CD4-positive, alpha-beta T cell (primary cell): ENCODE measurements at regions of chr3 and their contacts with region 1.

Region 1: GRCh38 chr3:27312044-27312668 is 57.0 kb downstream of the NEK10 start:
- DNase-seq: peak in 4 of 14 experiments; percentile 6 to 72 (median 70)
- ATAC-seq: peak; percentile 61
- H3K4me3 ChIP-seq: no peak overlapping the region
- H3K4me3 Mint-ChIP-seq: no peak overlapping the region
- H3K27ac ChIP-seq: no peak overlapping the region
- H3K27ac Mint-ChIP-seq: no peak overlapping the region
- H3K4me1 ChIP-seq: no peaks in the 10 kb centered on the region
- H3K4me1 Mint-ChIP-seq: no peaks in the 10 kb centered on the region
- H3K27me3 ChIP-seq: no peaks in the 10 kb centered on the region
- H3K27me3 Mint-ChIP-seq: peaks cover 5% of the 10 kb centered on the region
- CTCF ChIP-seq: peak; percentile 90

Region 2: DNA sequence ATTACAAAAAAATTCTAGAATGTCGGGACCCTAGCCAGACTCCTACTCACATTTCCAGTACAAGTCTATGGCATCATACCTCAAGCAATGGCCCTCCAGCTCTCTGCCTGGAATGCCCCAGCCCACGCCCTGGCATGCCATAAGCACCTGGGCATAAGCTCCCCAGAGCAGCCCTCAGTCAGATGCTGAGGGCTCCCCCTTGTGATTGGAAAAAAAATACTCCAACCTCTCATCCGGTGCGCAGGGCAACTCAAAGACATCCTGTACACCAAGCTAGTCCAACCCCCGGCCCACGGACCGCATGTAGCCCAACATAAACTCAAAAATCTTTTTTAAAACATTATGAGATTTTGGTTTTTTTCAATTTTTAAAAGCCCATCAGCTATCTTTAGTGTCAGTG is 58.3 kb before region 1 on chr3:
- CTCF ChIA-PET with region 1: no interaction called
- POLR2A ChIA-PET with region 1: no interaction called
- intact Hi-C with region 1: no loop called
- DNase-seq: peak in 3 of 14 experiments; percentile 8 to 15 (median 9)
- ATAC-seq: no peak
- H3K4me3 ChIP-seq: no peak overlapping the region
- H3K4me3 Mint-ChIP-seq: no peak overlapping the region
- H3K27ac ChIP-seq: no peak overlapping the region
- H3K27ac Mint-ChIP-seq: no peak overlapping the region
- H3K4me1 ChIP-seq: no peaks in the 10 kb centered on the region
- H3K4me1 Mint-ChIP-seq: no peaks in the 10 kb centered on the region
- H3K27me3 ChIP-seq: no peaks in the 10 kb centered on the region
- H3K27me3 Mint-ChIP-seq: peaks cover 7% of the 10 kb centered on the region
- CTCF ChIP-seq: no peak

Region 3: GRCh38 chr3:27368831-27369607 is 56.9 kb after region 1 on chr3 and contains the start of gene NEK10:
- CTCF ChIA-PET with region 1: no interaction called
- POLR2A ChIA-PET with region 1: interaction called, 4 read pairs
- intact Hi-C with region 1: loop called in 1 of 2 experiments (anchors 5 kb)
- DNase-seq: peak; percentile 84 to 96 (median 91)
- ATAC-seq: peak; percentile 96
- H3K4me3 ChIP-seq: peak within 1 kb of the TSS; percentile 73
- H3K4me3 Mint-ChIP-seq: peak within 1 kb of the TSS; percentile 91
- H3K27ac ChIP-seq: no peak within 1 kb of the TSS
- H3K27ac Mint-ChIP-seq: peak within 1 kb of the TSS; percentile 59
- H3K4me1 ChIP-seq: peaks cover 9% of the 10 kb centered on the region
- H3K4me1 Mint-ChIP-seq: peaks cover 15% of the 10 kb centered on the region
- H3K27me3 ChIP-seq: no peaks in the 10 kb centered on the region
- H3K27me3 Mint-ChIP-seq: no peaks in the 10 kb centered on the region
- CTCF ChIP-seq: peak; percentile 13
- total RNA-seq, gene NEK10: 0.61 to 0.77 TPM

Region 4: GRCh38 chr3:27467545-27467944 is 155.4 kb after region 1 on chr3:
- CTCF ChIA-PET with region 1: no interaction called
- POLR2A ChIA-PET with region 1: no interaction called
- intact Hi-C with region 1: loop called (anchors 2 kb)
- DNase-seq: peak in 3 of 14 experiments; percentile 65 to 66 (median 66)
- ATAC-seq: peak; percentile 92
- H3K4me3 ChIP-seq: no peak overlapping the region
- H3K4me3 Mint-ChIP-seq: no peak overlapping the region
- H3K27ac ChIP-seq: no peak overlapping the region
- H3K27ac Mint-ChIP-seq: peak overlapping the region; percentile 31
- H3K4me1 ChIP-seq: no peaks in the 10 kb centered on the region
- H3K4me1 Mint-ChIP-seq: peaks cover 32% of the 10 kb centered on the region
- H3K27me3 ChIP-seq: no peaks in the 10 kb centered on the region
- H3K27me3 Mint-ChIP-seq: no peaks in the 10 kb centered on the region
- CTCF ChIP-seq: peak; percentile 63

Region 5: DNA sequence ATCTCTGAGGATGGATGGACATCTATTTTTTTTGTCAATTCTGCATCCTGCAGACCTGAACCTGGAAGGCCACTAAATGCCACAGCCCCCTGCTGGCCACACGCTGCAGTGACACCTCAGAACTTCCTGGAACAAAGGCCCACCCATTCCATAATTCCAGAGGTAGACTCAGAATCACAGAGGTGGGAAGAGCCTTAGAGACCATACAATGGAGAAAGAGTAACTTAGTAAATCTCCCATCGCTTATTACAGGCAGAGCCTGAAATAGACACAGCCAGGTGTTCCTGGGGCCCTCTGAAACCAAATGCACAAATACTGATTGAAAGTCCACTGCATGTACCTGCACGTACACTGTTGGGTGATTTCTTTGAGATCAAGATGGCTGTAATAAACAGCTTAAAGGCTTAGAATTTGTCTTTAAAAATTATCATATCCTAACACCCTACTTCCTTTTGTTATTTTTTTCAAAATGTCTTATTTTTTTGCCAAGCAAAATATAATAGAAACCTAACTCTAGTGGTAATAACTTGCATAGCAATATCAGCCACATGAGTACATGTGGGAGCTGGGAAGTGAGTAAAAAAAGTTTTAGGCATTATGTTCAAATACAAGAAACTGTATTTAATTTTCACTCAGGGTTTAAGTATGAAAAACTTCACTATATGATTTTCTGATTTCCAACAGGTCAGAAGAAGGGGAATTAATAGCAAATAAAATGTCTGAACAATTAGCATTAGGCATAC is 347.3 kb after region 1 on chr3:
- CTCF ChIA-PET with region 1: interaction called, 3 read pairs
- POLR2A ChIA-PET with region 1: no interaction called
- intact Hi-C with region 1: loop called in 1 of 2 experiments (anchors 2 kb)
- DNase-seq: peak; percentile 17 to 68 (median 34)
- ATAC-seq: peak; percentile 58
- H3K4me3 ChIP-seq: no peak overlapping the region
- H3K4me3 Mint-ChIP-seq: no peak overlapping the region
- H3K27ac ChIP-seq: no peak overlapping the region
- H3K27ac Mint-ChIP-seq: no peak overlapping the region
- H3K4me1 ChIP-seq: peaks cover 3% of the 10 kb centered on the region
- H3K4me1 Mint-ChIP-seq: no peaks in the 10 kb centered on the region
- H3K27me3 ChIP-seq: no peaks in the 10 kb centered on the region
- H3K27me3 Mint-ChIP-seq: no peaks in the 10 kb centered on the region
- CTCF ChIP-seq: peak; percentile 96

Region 6: GRCh38 chr3:27681245-27681748 is 369.1 kb after region 1 on chr3:
- CTCF ChIA-PET with region 1: no interaction called
- POLR2A ChIA-PET with region 1: no interaction called
- intact Hi-C with region 1: loop called (anchors 1 kb)
- DNase-seq: peak in 10 of 14 experiments; percentile 8 to 85 (median 28)
- ATAC-seq: peak; percentile 91
- H3K4me3 ChIP-seq: no peak overlapping the region
- H3K4me3 Mint-ChIP-seq: peak overlapping the region; percentile 14
- H3K27ac ChIP-seq: no peak overlapping the region
- H3K27ac Mint-ChIP-seq: no peak overlapping the region
- H3K4me1 ChIP-seq: peaks cover 8% of the 10 kb centered on the region
- H3K4me1 Mint-ChIP-seq: peaks cover 11% of the 10 kb centered on the region
- H3K27me3 ChIP-seq: no peaks in the 10 kb centered on the region
- H3K27me3 Mint-ChIP-seq: peaks cover 9% of the 10 kb centered on the region
- CTCF ChIP-seq: peak; percentile 80

Region 7: GRCh38 chr3:28328188-28329151 is 1016.3 kb after region 1 on chr3:
- CTCF ChIA-PET with region 1: no interaction called
- POLR2A ChIA-PET with region 1: no interaction called
- intact Hi-C with region 1: loop called (anchors 2 to 5 kb)
- DNase-seq: peak in 3 of 14 experiments; percentile 63 to 68 (median 68)
- ATAC-seq: peak; percentile 43
- H3K4me3 ChIP-seq: no peak overlapping the region
- H3K4me3 Mint-ChIP-seq: no peak overlapping the region
- H3K27ac ChIP-seq: no peak overlapping the region
- H3K27ac Mint-ChIP-seq: no peak overlapping the region
- H3K4me1 ChIP-seq: no peaks in the 10 kb centered on the region
- H3K4me1 Mint-ChIP-seq: peaks cover 20% of the 10 kb centered on the region
- H3K27me3 ChIP-seq: no peaks in the 10 kb centered on the region
- H3K27me3 Mint-ChIP-seq: no peaks in the 10 kb centered on the region
- CTCF ChIP-seq: peak; percentile 83

Region 8: GRCh38 chr3:28334552-28334951 is 1022.4 kb after region 1 on chr3:
- CTCF ChIA-PET with region 1: no interaction called
- POLR2A ChIA-PET with region 1: no interaction called
- intact Hi-C with region 1: loop called (anchors 2 to 5 kb)
- DNase-seq: peak in 1 of 14 experiments; percentile 21
- ATAC-seq: no peak
- H3K4me3 ChIP-seq: no peak overlapping the region
- H3K4me3 Mint-ChIP-seq: no peak overlapping the region
- H3K27ac ChIP-seq: no peak overlapping the region
- H3K27ac Mint-ChIP-seq: no peak overlapping the region
- H3K4me1 ChIP-seq: peaks cover 4% of the 10 kb centered on the region
- H3K4me1 Mint-ChIP-seq: peaks cover 14% of the 10 kb centered on the region
- H3K27me3 ChIP-seq: no peaks in the 10 kb centered on the region
- H3K27me3 Mint-ChIP-seq: no peaks in the 10 kb centered on the region
- CTCF ChIP-seq: peak; percentile 39